ENCODE measurements at regions of chr1 and their contacts with region 1.

Region 1: DNA sequence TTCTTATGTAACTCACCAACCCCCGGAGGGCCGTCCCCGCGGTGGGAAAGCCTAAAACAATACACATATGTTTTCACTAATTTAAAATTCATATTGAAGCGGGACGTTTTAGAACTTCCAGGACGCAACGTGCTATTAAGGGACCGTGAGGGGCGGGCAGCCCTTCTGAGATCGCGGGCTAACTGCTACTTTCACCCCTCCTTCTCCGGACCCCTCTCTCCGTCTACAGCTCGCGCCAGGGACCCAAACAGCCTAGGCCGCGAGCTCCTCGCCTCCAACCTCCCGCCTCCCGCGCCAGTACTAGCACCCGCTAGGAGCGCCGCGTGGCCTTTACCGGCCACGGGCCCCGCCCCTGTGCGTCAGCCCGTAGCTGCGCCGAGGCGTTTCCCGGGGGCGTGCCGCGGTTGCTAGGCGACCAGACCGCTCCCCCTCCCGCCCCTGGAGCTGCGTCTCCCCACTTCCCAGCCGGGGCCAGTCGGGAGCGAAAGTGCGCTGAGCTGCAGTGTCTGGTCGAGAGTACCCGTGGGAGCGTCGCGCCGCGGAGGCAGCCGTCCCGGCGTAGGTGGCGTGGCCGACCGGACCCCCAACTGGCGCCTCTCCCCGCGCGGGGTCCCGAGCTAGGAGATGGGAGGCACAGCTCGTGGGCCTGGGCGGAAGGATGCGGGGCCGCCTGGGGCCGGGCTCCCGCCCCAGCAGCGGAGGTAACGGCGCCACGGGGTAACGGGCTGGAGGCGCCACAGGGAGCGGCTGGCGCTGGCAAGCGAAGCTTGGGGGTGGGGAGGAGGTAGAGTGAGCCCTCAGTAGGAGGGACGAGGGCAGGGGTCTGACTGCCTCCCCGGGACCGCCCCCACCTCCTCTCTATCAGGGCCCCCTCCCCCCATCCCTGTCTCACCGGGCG is at the start of gene DYRK3:
- DNase-seq: peak; percentile 96
- ATAC-seq: peak; percentile 99
- total RNA-seq, gene DYRK3: 21.9 TPM

Region 2: DNA sequence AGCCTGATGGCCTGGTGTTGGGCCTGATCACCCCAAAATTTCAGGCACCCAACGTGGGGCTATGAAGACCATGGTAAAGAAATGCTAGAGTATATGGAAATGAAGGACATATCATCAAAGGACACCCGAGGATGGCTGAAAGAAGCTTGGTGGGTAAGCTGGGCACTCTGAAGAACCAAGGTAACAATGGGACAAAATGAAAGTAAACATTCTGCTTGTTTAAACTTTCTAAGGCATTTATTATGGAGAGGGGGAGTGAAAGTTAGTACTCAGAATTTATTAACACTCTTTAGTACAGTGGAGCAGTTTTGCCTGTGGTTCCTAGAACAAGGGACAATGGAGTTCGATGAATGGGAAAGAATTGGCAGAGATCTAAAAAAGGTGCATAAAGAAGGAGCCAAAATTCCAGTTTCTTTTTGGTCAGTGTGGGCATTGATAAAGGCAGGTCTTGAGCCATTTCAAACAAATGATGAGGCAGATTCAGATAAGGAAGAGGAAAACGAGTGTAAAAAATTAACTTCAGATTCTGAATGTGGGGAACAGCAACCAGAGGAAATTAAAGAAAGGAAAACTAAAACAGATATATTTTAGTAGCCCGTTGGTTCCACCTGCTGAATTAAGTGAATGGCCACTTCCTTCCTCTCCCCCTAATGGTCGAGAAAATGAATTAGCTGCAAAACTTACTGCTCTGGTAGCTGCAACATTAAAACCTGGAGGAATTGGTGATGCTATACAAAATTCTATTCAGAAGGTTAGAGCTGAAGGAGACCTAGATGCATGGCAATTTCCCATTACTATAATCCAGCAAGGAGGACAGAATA is 777.0 kb before region 1 on chr1:
- intact Hi-C with region 1: no loop called
- DNase-seq: no peak
- ATAC-seq: no peak

Region 3: DNA sequence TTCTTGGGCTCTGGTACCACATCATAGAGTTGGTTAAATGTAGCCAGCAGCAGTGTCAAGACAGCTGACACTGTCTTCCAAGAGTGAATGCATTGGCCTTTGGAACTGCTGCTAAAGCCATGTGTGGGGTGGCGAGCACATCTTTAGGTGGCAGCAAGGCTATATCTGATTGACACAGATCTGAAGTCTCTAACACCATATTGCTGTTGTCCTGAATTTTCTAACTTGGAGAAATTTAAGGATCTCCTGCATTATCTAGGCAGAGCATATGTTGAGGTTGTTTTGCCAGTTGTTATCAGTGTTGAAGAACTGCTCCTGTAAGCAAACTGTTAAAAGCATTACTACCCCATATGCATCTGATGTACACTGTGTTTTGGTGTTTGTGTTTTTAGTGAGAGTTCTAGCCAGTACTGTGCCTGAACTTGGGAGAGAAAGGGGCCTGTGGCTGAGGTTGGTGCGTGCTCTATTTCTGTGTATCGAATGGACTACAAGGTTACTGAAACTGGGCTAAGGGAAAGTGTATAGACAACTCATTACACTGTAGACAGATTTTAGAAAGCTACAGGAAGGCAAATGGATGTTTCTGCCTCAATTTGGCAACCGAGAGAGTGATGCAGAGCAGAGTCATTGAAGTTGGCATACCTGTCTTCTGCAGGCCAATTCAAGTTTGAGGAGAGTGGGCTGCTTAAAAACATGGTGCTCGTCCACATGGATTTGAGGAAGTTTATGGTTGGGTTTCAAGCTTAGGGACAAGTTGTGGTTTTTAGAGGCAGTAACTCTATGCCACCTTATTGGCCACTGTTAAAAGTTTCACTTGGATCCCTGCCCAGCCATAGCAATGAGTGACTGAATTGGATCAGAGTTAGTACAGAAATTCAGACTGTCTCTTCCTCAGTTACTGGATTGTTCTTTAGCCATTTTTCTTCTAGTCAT is 16.9 kb after region 1 on chr1:
- intact Hi-C with region 1: loop called (anchors 2 kb)
- DNase-seq: no peak
- ATAC-seq: no peak

Region 4: DNA sequence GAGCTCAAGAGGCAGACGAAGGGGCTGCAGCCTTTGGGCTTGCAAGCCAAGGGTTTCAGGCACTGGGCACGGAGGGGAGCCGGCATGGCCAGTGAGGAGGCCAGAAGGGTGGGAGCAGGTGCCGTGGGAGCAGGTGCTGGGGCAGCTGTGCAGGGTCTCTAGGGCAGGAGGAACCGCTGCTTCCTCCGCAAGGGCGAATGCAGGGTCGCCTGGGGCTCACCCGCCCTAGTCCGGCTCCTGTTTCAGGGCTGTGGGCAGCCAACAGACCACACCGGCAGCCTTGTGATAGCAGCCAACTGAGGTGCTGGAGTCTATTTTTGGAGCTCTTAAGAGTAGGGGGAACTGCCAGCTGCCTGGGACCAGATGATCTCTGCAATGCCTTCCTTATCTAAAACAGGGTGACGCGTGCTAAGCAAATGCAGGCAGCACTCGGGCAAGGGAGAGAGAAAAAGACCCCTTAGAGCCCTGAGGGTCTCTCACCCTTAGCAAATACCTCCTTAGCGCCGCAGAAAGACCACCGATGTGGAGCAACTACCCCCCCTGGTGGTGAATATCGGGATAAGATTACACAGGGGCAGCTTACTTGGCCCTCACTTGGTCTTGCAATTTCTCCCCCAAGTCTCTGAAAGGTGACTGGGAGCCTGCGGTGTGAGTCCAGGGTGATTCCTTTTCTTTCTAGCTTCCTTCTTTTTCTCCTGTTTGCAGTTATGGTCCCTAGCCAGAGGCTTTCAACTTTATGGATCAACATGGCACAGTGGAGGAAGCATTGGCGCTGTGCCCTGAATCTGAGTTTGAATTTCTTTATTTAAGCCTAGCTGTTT is 28.7 kb after region 1 on chr1:
- intact Hi-C with region 1: loop called (anchors 1 kb)
- DNase-seq: no peak
- ATAC-seq: peak; percentile 73

Region 5: DNA sequence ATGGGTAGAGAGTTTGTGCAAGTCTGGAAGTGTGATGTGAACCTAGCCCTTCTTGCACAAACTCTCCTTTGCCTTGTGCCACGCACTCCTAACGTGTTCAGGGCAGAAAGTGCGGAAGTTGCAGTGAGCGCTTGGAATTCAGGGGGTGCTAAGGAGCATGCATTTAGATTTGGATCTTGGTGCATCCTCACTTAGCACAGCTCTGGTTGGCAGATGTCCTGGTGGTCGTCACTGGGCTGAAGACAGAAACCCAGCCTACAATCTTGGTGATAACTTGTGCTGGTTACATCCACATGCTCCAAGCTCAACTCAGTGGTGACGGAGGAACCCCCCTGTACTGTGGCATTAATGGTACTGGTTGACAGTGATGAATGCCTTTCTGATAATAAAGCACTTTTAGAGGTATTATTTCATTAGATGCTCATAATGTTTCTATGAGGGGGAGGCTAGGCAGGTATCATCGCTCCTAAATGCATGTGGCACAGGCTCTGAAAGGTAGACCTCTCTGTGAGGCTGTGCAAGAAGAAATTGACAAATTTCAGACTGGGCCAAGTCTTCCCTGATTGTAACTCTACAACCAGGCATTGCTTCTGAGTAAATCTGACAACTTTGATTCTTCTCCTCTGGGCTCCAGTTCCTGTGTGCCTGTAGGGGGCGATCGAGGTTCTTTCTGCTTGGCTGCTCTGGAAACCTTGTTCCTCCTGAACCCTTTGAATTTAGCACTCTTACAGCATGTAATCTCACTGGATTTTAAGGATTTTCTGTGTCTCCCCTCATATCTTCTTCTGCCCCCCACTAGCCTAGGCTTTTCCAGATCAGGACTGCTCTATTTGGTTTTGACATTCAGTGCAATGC is 90.0 kb after region 1 on chr1:
- intact Hi-C with region 1: loop called (anchors 2 kb)
- DNase-seq: no peak
- ATAC-seq: no peak

Region 6: GRCh38 chr1:206808615-206809014 is 173.3 kb after region 1 on chr1:
- intact Hi-C with region 1: loop called (anchors 2 kb)
- DNase-seq: no peak
- ATAC-seq: peak; percentile 68

Region 7: DNA sequence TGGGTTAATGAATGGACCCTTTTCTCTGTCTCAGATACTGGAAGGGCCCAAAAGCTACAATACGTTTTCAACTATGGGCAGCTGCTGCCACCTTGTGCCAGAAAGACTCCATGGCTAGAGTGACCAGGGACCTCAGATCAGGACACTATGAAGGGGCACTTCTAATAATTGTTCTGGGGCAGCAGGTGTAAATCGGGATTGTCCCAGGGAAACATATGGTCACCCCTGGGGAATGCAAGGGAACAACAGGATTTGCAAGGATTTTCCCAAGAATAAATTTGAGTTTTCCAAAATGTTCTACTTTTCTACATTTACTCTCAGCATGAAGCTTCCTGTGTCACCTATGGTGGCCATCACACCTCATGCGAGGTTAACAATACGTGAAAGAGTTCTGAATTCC is 346.9 kb after region 1 on chr1:
- intact Hi-C with region 1: loop called (anchors 10 kb)
- DNase-seq: no peak
- ATAC-seq: peak; percentile 59

Measured in Right ventricle myocardium inferior (tissue), 1 donor.